Prostate gland (tissue), 2 donors: ENCODE measurements at regions of chr2 and their contacts with region 1.

Region 1: DNA sequence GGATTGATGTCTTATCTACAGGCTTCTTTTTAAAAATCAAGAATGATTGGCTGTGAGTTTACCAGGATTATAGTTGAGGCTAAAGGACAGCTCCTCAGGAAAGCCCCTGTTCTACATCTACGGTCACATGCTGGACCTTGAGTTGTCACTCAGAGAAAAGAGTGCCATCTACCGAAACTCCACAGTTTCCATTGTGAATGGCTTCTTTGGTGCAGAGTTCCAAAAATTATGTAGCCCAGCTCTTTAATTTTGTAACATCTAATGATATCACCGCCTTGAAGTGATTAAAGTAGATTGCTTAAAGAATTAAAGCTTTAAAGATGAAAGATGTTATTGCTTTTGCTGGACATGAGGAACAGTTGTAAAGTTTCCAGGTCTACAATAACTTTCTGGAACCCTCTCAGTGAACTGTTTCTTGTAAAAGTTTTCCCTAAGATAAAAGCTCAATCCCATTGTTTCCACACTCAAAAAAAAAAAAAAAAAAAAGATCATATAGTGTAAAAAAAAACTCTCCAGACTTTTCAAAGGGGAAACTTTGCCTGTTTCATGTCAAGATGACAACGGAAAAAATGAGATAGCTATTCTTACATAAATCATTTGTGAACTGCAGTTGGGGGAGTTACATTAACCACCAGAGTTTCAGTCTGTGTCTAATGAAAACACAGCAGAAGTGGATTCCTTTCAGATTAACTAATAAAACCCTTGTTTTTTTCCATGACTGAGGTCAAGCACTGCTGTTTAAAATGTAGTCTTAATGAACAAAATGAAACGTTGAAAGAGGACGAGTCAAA is 4.3 kb downstream of the COL3A1 start:
- DNase-seq: no peak
- H3K4me3 ChIP-seq: no peak overlapping the region
- H3K27ac ChIP-seq: peak overlapping the region; percentile 46 to 59
- H3K4me1 ChIP-seq: no peaks in the 10 kb centered on the region
- H3K27me3 ChIP-seq: no peaks in the 10 kb centered on the region
- CTCF ChIP-seq: no peak
- POLR2A ChIP-seq: no peak

Region 2: DNA sequence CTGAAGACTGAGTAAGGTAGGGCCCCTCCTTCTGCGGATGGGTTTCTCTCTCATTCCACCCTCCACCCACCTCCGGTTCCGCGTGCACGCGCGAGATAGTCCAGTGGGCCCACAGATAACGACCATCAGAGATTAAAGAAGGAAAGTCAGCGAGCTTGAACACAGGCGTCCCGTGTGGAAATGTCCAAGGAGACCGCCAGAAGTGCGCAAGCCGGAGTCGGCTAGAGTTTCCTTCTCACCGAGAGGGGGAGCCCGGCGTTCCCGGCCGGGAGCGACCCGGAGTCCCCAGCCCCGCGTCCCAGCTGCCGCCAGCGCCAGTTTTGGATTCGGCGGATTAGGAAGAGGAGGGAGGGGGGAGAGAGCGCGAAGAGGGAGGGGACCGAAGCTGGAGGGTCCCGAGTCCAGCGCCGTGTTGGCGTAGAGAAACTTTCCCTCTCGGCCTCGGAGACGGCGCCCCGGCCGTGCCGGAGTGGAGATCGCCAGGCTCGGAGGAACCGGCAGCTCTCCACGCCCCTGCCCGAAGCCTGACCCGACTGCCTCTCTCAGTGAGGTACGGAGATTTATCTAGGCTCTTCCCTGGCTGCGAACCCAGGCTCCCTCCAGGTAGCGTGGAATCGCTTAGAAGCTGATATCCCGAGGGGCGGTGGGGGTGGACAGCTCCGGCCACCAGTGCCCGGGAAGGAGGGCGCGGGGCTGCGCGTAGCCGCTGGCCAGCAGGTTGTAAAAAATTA is 686.7 kb before region 1 on chr2 and contains the start of gene GULP1:
- intact Hi-C with region 1: loop called (anchors 5 kb)
- DNase-seq: peak; percentile 70
- H3K4me3 ChIP-seq: peak within 1 kb of the TSS; percentile 74 to 82
- H3K27ac ChIP-seq: peak within 1 kb of the TSS; percentile 98 to 99
- H3K4me1 ChIP-seq: peaks cover 6% of the 10 kb centered on the region
- H3K27me3 ChIP-seq: no peaks in the 10 kb centered on the region
- CTCF ChIP-seq: peak; percentile 28 to 73 (median 57)
- POLR2A ChIP-seq: peak; percentile 19
- total RNA-seq, gene GULP1: 29.3 to 45.4 TPM

Region 3: GRCh38 chr2:188788621-188789020 is 189.9 kb before region 1 on chr2:
- intact Hi-C with region 1: loop called (anchors 5 kb)
- DNase-seq: peak; percentile 9
- H3K4me3 ChIP-seq: no peak overlapping the region
- H3K27ac ChIP-seq: peak overlapping the region in 1 of 2 donors; percentile 42
- H3K4me1 ChIP-seq: no peaks in the 10 kb centered on the region
- H3K27me3 ChIP-seq: no peaks in the 10 kb centered on the region
- CTCF ChIP-seq: no peak
- POLR2A ChIP-seq: no peak

Region 4: GRCh38 chr2:188897096-188897495 is 81.4 kb before region 1 on chr2:
- intact Hi-C with region 1: loop called (anchors 10 kb)
- DNase-seq: no peak
- H3K4me3 ChIP-seq: no peak overlapping the region
- H3K27ac ChIP-seq: peak overlapping the region in 1 of 2 donors; percentile 21
- H3K4me1 ChIP-seq: no peaks in the 10 kb centered on the region
- H3K27me3 ChIP-seq: no peaks in the 10 kb centered on the region
- CTCF ChIP-seq: no peak
- POLR2A ChIP-seq: no peak

Region 5: DNA sequence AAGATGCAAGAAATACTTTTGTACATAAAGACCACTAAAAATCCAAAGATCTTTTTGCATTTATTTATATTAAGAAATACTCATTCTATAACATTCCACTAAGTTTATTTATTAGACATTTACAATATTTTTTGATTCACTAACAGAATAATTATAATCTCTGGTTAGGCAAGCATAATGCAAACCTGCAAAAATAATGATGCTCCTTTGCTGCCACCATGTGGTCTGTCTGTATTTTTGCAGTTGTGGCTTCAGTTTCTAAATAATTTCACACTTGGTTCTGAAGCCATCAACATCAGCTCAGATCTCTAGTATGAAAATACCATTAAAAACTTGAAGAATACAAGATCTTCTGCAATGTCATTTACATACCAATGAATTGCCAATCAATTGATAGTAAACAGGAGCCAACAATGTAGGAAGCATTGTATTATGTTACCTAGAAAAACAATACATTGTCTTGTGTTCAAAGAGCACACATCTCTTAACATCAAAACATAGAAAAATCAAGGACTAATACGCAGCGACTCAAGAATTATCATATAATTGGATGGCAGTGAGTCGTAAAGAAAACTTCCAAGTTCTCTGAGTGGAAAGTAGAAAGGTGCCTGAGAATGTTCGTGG is 434.0 kb after region 1 on chr2:
- intact Hi-C with region 1: loop called (anchors 5 kb)
- DNase-seq: no peak
- H3K4me3 ChIP-seq: no peak overlapping the region
- H3K27ac ChIP-seq: no peak overlapping the region
- H3K4me1 ChIP-seq: no peaks in the 10 kb centered on the region
- H3K27me3 ChIP-seq: no peaks in the 10 kb centered on the region
- CTCF ChIP-seq: peak; percentile 39 to 77 (median 66)
- POLR2A ChIP-seq: no peak